Activated T-helper 1 cell treated with anti-CD3 and anti-CD28 coated beads, Interleukin-12 subunit alpha, Interleukin-12 subunit beta, Interleukin-2, Interleukin-4 antibody, amounts not matched to agents 30 ng/mL and 10 ng/mL and 1 ng/mL, durations not matched to agents 14 hours and 24 hours and 36 hours (primary cell): ENCODE measurements at regions of chr3 and their contacts with region 1.

Region 1: GRCh38 chr3:197791113-197791891 is at the start of gene LRCH3:
- DNase-seq: peak; percentile 80
- H3K4me3 Mint-ChIP-seq: peak within 1 kb of the TSS; percentile 98
- H3K27ac Mint-ChIP-seq: peak within 1 kb of the TSS; percentile 98
- H3K4me1 Mint-ChIP-seq: peaks cover 29% of the 10 kb centered on the region
- H3K27me3 Mint-ChIP-seq: peaks cover 2% of the 10 kb centered on the region
- total RNA-seq, gene LRCH3: 50.0 and 57.8 TPM in 2 replicates

Region 2: GRCh38 chr3:196849180-196849741 is 942.0 kb before region 1 on chr3:
- intact Hi-C with region 1: no loop called
- DNase-seq: no peak
- H3K4me3 Mint-ChIP-seq: no peak overlapping the region
- H3K27ac Mint-ChIP-seq: no peak overlapping the region
- H3K4me1 Mint-ChIP-seq: no peaks in the 10 kb centered on the region
- H3K27me3 Mint-ChIP-seq: peaks cover 2% of the 10 kb centered on the region

Region 3: DNA sequence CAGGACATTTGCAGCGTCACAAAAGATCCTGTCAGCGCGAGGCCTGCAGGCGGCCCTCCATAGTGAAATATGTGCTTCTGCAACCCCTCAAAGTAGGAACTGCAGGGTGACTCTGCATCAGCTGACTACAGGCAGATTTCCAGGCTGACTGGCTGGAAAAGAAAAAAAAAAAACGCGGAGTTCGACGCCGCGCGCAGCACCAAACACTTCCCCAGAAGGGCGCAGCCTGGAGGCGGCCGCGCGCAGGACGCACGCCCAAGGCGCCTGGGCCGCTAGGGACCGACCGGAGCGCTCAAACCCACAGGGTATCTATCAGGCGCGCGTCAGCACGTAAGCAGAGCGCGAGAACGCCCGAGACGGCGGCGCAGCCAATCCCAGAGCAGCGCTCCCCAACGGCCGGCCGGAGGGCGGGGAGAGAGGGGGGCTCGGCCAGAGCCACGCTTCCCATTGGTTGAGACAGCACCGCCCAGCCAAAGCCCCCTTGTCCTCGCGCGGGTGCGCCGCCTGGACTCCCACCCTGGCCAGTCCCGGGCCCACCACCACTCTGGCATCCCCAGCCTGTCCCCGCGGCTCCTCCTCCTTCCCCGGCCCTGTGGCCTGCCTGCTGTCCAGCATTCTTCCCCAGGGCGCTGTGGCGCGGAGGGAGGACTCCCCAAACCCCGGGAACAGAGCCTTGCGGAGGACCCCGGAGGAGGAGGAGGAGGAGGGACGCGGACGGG is 236.6 kb before region 1 on chr3:
- intact Hi-C with region 1: loop called (anchors 1 kb)
- DNase-seq: peak; percentile 93
- H3K4me3 Mint-ChIP-seq: peak overlapping the region; percentile 93
- H3K27ac Mint-ChIP-seq: peak overlapping the region; percentile 97
- H3K4me1 Mint-ChIP-seq: peaks cover 39% of the 10 kb centered on the region
- H3K27me3 Mint-ChIP-seq: peaks cover 4% of the 10 kb centered on the region

Region 4: GRCh38 chr3:197567904-197568681 is 223.2 kb before region 1 on chr3:
- intact Hi-C with region 1: no loop called
- DNase-seq: no peak
- H3K4me3 Mint-ChIP-seq: no peak overlapping the region
- H3K27ac Mint-ChIP-seq: no peak overlapping the region
- H3K4me1 Mint-ChIP-seq: no peaks in the 10 kb centered on the region
- H3K27me3 Mint-ChIP-seq: no peaks in the 10 kb centered on the region

Region 5: DNA sequence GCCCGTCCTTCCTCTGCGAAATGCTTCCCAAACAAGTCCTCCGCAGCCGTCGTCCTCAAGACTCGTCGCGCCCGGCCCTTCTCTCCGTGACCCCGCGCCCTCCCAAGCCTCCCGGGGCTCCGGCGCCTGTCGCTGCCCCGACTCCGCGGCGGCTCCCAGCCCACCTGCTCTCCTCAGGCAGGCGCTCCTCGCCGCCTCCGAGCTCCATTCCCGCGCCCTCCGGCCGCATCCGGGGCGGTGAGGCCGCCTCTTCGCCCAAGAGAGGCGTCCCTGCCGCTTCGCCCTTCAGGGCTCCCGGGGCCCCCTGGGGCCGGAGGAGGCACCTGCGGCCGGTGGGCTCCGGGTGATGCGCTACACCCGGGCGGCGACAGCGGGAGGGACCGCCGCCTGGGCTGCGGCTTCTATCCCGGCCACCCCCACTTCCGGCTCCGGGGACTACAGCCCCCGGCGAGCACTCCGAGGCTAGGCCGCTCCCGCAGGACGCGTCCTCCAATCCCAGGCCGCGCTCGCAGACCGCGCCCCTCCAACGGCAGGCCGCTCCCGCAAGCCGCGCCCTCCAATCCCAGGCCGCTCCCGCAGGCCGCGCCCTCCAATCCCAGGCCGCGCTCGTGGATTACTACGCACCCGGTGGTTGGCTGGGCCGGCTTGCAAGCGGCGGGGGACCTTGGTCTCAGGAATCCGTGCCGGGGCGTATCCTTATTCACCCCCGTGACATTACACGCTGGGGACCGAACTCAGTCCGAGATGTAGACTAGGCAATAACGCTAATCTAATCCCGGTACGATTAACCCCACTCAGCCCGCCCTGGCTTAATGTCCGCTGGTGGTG is 54.6 kb before region 1 on chr3 and contains the start of gene RUBCN:
- intact Hi-C with region 1: loop called (anchors 1 kb)
- DNase-seq: peak; percentile 94
- H3K4me3 Mint-ChIP-seq: peak within 1 kb of the TSS; percentile 90
- H3K27ac Mint-ChIP-seq: peak within 1 kb of the TSS; percentile 95
- H3K4me1 Mint-ChIP-seq: peaks cover 36% of the 10 kb centered on the region
- H3K27me3 Mint-ChIP-seq: peaks cover 4% of the 10 kb centered on the region
- total RNA-seq, gene RUBCN: 44.7 and 45.2 TPM in 2 replicates

Region 6: DNA sequence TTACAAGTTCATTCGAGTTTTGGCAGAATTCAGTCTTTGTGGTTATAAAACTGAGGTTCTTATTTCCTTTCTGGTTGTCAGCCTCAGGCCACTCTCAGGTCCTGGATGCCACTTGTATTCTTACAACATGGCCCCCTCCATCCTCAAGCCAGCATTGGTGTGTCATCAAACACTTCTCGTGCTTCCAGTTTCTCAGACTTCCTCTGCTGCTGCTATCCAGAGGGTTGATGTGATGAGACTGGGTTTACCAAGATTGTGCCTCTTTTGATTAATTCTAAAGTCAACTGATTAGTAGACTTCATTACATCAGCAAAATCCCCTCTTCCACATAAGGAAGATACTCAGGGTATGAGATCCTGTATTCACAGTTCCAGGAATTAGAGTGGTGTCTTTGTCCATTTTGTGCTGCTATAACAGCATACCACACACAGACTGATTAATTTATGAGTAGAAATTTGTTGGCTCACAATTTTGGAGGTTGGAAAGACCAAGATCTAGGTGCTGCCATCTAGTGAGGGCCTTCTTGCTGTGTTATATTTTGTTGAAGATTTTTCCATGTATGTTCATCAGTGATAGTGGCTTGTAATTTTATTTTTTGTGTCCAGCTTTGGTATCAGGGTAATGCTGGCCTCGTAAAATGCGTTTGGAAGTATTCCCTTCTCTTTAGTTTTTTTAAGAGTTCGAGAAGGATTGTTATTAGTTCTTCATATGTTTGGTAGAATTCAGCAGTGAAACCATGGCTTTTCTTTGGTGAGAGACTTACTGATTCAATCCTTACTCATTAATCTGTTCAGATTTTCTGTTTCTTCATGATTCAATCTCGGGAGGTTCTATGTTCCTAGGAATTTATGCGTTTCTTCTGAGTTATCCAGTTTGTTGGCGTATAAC is 10.8 kb after region 1 on chr3:
- intact Hi-C with region 1: loop called (anchors 1 kb)
- DNase-seq: no peak
- H3K4me3 Mint-ChIP-seq: no peak overlapping the region
- H3K27ac Mint-ChIP-seq: peak overlapping the region; percentile 42
- H3K4me1 Mint-ChIP-seq: peaks cover 39% of the 10 kb centered on the region
- H3K27me3 Mint-ChIP-seq: no peaks in the 10 kb centered on the region

Region 7: GRCh38 chr3:197878427-197878826 is 87.1 kb after region 1 on chr3:
- intact Hi-C with region 1: loop called (anchors 1 kb)
- DNase-seq: peak; percentile 46
- H3K4me3 Mint-ChIP-seq: peak overlapping the region; percentile 65
- H3K27ac Mint-ChIP-seq: peak overlapping the region; percentile 90
- H3K4me1 Mint-ChIP-seq: peaks cover 25% of the 10 kb centered on the region
- H3K27me3 Mint-ChIP-seq: no peaks in the 10 kb centered on the region

Region 8: GRCh38 chr3:197959898-197960693 is 168.8 kb after region 1 on chr3 and contains the start of gene LMLN:
- intact Hi-C with region 1: no loop called
- DNase-seq: peak; percentile 94
- H3K4me3 Mint-ChIP-seq: peak within 1 kb of the TSS; percentile 86
- H3K27ac Mint-ChIP-seq: peak within 1 kb of the TSS; percentile 93
- H3K4me1 Mint-ChIP-seq: peaks cover 51% of the 10 kb centered on the region
- H3K27me3 Mint-ChIP-seq: no peaks in the 10 kb centered on the region
- total RNA-seq, gene LMLN: 2.8 and 3.7 TPM in 2 replicates